K562 (cell line): ENCODE measurements at regions of chr1 and their contacts with region 1.

Region 1: GRCh38 chr1:50978144-50978851 is 8.3 kb downstream of the CDKN2C start:
- DNase-seq: peak in 3 of 4 experiments; percentile 78 to 86 (median 80)
- ATAC-seq: peak; percentile 35
- H3K4me3 ChIP-seq: peak overlapping the region; percentile 67
- H3K27ac ChIP-seq: peak overlapping the region; percentile 96
- H3K4me1 ChIP-seq: peaks cover 17 to 21% of the 10 kb centered on the region in 2 experiments
- H3K27me3 ChIP-seq: no peaks in the 10 kb centered on the region
- CTCF ChIP-seq: no peak
- EP300 ChIP-seq: 0 out of 2 replicates have a peak, but pooled peaks have one; percentile 14
- POLR2A ChIP-seq: peak; percentile 78
- RAD21 ChIP-seq: no peak

Region 2: DNA sequence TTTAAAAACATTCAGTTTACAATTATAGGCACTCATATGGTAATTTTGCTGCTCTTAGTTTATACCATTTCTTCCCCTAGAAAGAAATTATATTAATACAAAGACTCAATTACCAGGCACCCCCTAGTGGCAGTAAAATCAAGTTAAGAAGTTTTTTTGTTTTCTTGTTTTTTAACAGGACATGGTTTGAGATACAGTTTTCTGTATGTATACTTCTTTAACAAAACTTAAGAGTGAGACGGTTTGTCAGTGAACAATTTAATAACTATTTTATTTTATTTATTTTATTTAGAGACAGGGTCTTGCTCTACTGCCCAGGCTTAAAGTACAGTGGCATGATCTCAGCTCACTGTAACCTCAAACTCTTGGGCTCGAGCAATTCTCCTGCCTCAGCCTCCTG is 242.9 kb before region 1 on chr1:
- CTCF ChIA-PET with region 1: no interaction called
- POLR2A ChIA-PET with region 1: no interaction called
- in situ Hi-C with region 1: no loop called
- intact Hi-C with region 1: no loop called
- DNase-seq: peak; percentile 28 to 47 (median 42)
- ATAC-seq: no peak
- H3K4me3 ChIP-seq: no peak overlapping the region
- H3K27ac ChIP-seq: no peak overlapping the region
- H3K4me1 ChIP-seq: no peaks in the 10 kb centered on the region
- H3K27me3 ChIP-seq: no peaks in the 10 kb centered on the region
- CTCF ChIP-seq: peak in 2 of 3 experiments; percentile 35 to 60; a peak in 4 of 6 replicates
- EP300 ChIP-seq: no peak
- POLR2A ChIP-seq: no peak
- RAD21 ChIP-seq: peak in 1 of 2 experiments; percentile 57; a peak in 3 of 4 replicates

Region 3: GRCh38 chr1:50959913-50960844 is 18.1 kb before region 1 on chr1 and contains the start of gene FAF1:
- CTCF ChIA-PET with region 1: no interaction called
- POLR2A ChIA-PET with region 1: interaction called, 26 read pairs
- in situ Hi-C with region 1: no loop called
- intact Hi-C with region 1: no loop called
- DNase-seq: peak; percentile 94 to 100 (median 96)
- ATAC-seq: peak; percentile 88
- H3K4me3 ChIP-seq: peak within 1 kb of the TSS; percentile 62
- H3K27ac ChIP-seq: peak within 1 kb of the TSS; percentile 85
- H3K4me1 ChIP-seq: peaks cover 9 to 15% of the 10 kb centered on the region in 2 experiments; a peak in 4 of 5 replicates
- H3K27me3 ChIP-seq: no peaks in the 10 kb centered on the region
- CTCF ChIP-seq: peak; percentile 34 to 60 (median 56)
- EP300 ChIP-seq: peak; percentile 58
- POLR2A ChIP-seq: peak; percentile 94
- RAD21 ChIP-seq: peak in 1 of 2 experiments; percentile 20; a peak in 2 of 4 replicates
- polyA plus RNA-seq, gene FAF1: 48.7 to 60.9 TPM

Region 4: GRCh38 chr1:50968158-50968820 is 10.0 kb before region 1 on chr1:
- CTCF ChIA-PET with region 1: no interaction called
- POLR2A ChIA-PET with region 1: interaction called, 65 read pairs
- in situ Hi-C with region 1: no loop called
- intact Hi-C with region 1: loop called (anchors 1 kb)
- DNase-seq: peak; percentile 93 to 97 (median 96)
- ATAC-seq: peak; percentile 75
- H3K4me3 ChIP-seq: peak overlapping the region; percentile 78
- H3K27ac ChIP-seq: peak overlapping the region; percentile 92
- H3K4me1 ChIP-seq: peaks cover 3 to 15% of the 10 kb centered on the region in 2 experiments; a peak in 3 of 5 replicates
- H3K27me3 ChIP-seq: no peaks in the 10 kb centered on the region
- CTCF ChIP-seq: peak; percentile 42 to 67 (median 59); a peak in 4 of 6 replicates
- EP300 ChIP-seq: peak; percentile 55
- POLR2A ChIP-seq: peak; percentile 89
- RAD21 ChIP-seq: peak; percentile 40 to 50; a peak in 3 of 4 replicates

Region 5: GRCh38 chr1:51044834-51045233 is 66.5 kb after region 1 on chr1:
- CTCF ChIA-PET with region 1: no interaction called
- POLR2A ChIA-PET with region 1: interaction called, 5 read pairs
- in situ Hi-C with region 1: no loop called
- intact Hi-C with region 1: loop called (anchors 5 kb)
- DNase-seq: peak in 2 of 4 experiments; percentile 17 to 21
- ATAC-seq: peak; percentile 65; the same call in 2 of the 3 replicates
- H3K4me3 ChIP-seq: no peak overlapping the region
- H3K27ac ChIP-seq: no peak overlapping the region
- H3K4me1 ChIP-seq: no peaks in the 10 kb centered on the region
- H3K27me3 ChIP-seq: no peaks in the 10 kb centered on the region
- CTCF ChIP-seq: peak; percentile 10 to 76 (median 26); a peak in 3 of 6 replicates
- EP300 ChIP-seq: no peak
- POLR2A ChIP-seq: no peak
- RAD21 ChIP-seq: peak; percentile 71 to 76

Region 6: DNA sequence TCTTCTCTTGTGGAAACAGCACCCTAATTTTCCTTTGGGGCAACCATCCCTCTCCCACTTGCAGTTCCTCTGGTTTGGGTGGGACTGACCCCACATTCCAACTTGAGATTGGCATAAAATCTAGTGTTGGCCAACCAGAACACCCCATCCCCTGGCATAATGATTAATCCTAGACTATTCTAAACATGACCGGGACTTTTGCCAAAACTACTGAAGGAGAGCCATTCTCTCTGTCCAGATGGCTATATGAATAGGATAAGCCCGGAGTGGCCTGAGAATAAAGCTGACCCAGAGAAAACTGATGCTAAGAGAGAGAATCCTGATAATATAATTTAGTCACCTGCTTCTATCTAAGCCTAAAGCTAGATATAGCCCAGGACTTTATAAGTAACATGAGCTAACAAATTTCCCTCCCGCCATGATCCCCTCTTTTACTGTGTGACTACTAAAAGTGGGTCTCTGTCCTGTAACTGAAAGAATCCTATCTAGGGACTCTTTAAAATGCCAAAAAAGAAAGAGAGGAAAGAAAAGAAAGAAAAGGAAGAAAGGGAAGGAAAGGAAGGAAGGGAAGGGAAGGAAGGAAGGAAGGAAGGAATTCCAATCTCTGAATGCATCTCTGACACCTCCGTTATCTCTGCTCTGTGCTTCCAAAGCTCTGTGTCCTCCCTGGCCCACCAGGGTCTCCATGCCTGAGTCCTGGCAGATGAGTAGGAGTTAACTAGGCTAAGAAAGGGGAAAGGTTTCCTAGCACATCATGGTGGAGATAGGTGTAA is 928.2 kb after region 1 on chr1:
- CTCF ChIA-PET with region 1: no interaction called
- POLR2A ChIA-PET with region 1: no interaction called
- in situ Hi-C with region 1: no loop called
- intact Hi-C with region 1: no loop called
- DNase-seq: no peak
- ATAC-seq: no peak
- H3K4me3 ChIP-seq: no peak overlapping the region
- H3K27ac ChIP-seq: no peak overlapping the region
- H3K4me1 ChIP-seq: no peaks in the 10 kb centered on the region
- H3K27me3 ChIP-seq: peaks cover 13 to 24% of the 10 kb centered on the region in 2 experiments
- CTCF ChIP-seq: no peak
- EP300 ChIP-seq: no peak
- POLR2A ChIP-seq: no peak
- RAD21 ChIP-seq: no peak